Endothelial cell of umbilical vein (primary cell): ENCODE measurements at regions of chr1 and their contacts with region 1.

Region 1: GRCh38 chr1:161382214-161383019 is 14.7 kb upstream of the CFAP126 start:
- DNase-seq: peak; percentile 80
- H3K4me3 ChIP-seq: no peak overlapping the region
- H3K27ac ChIP-seq: peak overlapping the region; percentile 82
- H3K4me1 ChIP-seq: peaks cover 15% of the 10 kb centered on the region
- H3K27me3 ChIP-seq: no peaks in the 10 kb centered on the region
- CTCF ChIP-seq: peak; percentile 24 to 32
- POLR2A ChIP-seq: no peak

Region 2: DNA sequence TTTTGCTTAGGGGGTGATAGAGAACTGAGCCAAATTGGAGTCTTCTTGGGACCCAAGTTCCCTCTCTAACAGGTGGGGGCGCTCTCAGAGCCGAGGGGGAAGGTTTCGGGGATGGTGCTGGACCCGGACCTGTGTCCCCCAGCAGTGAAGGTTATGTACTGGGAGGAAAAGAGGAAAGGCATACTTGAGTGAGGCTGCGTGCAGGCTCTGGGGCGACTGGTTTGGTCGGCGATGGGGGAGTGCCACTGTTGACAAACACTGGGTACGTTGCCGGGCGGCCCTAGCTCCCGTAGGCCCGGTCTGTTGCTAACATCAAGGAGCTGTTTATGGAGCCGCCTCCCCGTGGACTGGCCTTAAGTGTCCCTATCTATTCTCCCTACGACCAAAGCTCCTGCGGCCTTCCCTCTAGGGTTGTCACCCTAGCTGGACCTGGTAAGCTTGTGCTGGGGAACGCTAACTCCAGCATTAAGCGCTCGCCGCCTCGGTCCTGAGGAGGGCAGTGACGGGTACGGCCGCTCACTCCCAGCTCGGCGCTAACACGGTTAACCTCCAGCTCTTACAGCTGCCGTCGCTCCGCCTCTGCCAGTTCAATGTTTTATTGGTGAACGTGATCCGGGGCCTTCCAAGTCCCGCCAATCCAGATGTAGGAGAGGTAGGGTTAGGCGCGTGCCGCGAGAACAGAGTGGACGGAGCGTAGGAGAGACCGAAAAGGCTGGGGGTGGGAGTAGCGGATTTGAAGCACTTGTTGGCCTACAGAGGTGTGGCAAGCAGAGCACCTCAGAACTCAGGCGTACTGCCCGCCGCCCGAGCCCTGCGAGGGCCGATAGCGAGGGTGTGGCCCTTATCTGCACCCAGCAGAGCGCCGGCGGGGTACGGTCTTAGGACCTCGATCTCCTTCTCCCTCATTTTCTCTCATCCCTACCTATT is 216.4 kb before region 1 on chr1 and contains the start of gene PPOX:
- CTCF ChIA-PET with region 1: interaction called, 35 read pairs
- POLR2A ChIA-PET with region 1: interaction called, 4 read pairs
- dilution Hi-C with region 1: no loop called
- intact Hi-C with region 1: loop called (anchors 2 kb)
- DNase-seq: peak; percentile 99
- H3K4me3 ChIP-seq: peak within 1 kb of the TSS; percentile 81 to 87 (median 87)
- H3K27ac ChIP-seq: peak within 1 kb of the TSS; percentile 74
- H3K4me1 ChIP-seq: peaks cover 16% of the 10 kb centered on the region
- H3K27me3 ChIP-seq: no peaks in the 10 kb centered on the region
- CTCF ChIP-seq: peak; percentile 42 to 60
- POLR2A ChIP-seq: peak; percentile 21
- total RNA-seq, gene PPOX: 28.5 and 28.9 TPM in 2 replicates

Region 3: DNA sequence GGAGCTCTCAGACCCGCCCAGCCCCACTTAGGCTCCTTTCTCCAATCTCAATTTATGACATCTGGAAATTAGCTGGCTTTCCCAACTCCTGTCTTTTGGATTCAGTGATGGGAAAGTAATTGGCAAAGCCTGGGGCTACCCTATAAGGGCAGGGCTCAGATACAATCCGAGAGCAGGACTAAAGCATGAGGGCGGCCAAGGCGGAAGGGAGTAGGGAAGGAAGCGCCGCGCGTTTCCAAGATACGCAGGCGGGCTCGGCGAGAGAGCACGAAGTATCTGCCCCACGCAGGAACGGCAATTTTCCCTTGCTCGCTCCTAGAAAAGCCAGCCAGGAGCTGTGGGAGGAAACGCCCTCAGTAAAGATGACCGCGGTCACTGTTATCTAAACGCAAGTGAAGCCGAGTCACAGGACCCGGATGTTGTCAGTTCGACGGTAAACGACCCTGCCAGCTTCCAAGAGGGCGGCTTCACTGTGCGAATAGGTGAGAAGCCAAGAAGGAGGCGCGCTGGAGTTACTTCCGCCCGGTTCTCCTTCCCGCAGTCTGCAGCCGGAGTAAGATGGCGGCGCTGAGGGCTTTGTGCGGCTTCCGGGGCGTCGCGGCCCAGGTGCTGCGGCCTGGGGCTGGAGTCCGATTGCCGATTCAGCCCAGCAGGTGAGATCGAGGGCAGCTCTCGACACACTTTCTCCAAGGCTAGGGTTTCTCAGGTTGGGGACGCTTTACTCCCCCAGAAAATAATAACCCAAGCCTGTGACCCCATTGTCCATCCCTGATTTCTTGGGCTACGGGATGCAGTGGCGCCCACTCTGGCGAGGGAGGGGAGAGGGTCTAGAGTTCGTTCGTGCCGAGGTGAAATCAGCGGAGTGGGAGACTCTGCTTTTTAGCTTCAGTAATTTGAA is 180.3 kb before region 1 on chr1 and contains the start of gene NDUFS2:
- CTCF ChIA-PET with region 1: interaction called, 28 read pairs
- POLR2A ChIA-PET with region 1: no interaction called
- dilution Hi-C with region 1: no loop called
- intact Hi-C with region 1: no loop called
- DNase-seq: peak; percentile 98
- H3K4me3 ChIP-seq: peak within 1 kb of the TSS; percentile 72 to 96 (median 75)
- H3K27ac ChIP-seq: peak within 1 kb of the TSS; percentile 98
- H3K4me1 ChIP-seq: peaks cover 59% of the 10 kb centered on the region
- H3K27me3 ChIP-seq: no peaks in the 10 kb centered on the region
- CTCF ChIP-seq: peak in 1 of 2 donors; percentile 9
- POLR2A ChIP-seq: peak; percentile 93
- total RNA-seq, gene NDUFS2: 95.1 and 99.7 TPM in 2 replicates

Region 4: GRCh38 chr1:161225534-161226319 is 156.7 kb before region 1 on chr1 and contains the start of gene TOMM40L:
- CTCF ChIA-PET with region 1: interaction called, 156 read pairs
- POLR2A ChIA-PET with region 1: no interaction called
- dilution Hi-C with region 1: no loop called
- intact Hi-C with region 1: loop called (anchors 1 kb)
- DNase-seq: peak; percentile 99
- H3K4me3 ChIP-seq: peak within 1 kb of the TSS; percentile 43 to 83 (median 59)
- H3K27ac ChIP-seq: peak within 1 kb of the TSS; percentile 31
- H3K4me1 ChIP-seq: peaks cover 18% of the 10 kb centered on the region
- H3K27me3 ChIP-seq: no peaks in the 10 kb centered on the region
- CTCF ChIP-seq: peak; percentile 55 to 57
- POLR2A ChIP-seq: peak; percentile 36
- total RNA-seq, gene TOMM40L: 18.7 TPM in 2 replicates

Region 5: DNA sequence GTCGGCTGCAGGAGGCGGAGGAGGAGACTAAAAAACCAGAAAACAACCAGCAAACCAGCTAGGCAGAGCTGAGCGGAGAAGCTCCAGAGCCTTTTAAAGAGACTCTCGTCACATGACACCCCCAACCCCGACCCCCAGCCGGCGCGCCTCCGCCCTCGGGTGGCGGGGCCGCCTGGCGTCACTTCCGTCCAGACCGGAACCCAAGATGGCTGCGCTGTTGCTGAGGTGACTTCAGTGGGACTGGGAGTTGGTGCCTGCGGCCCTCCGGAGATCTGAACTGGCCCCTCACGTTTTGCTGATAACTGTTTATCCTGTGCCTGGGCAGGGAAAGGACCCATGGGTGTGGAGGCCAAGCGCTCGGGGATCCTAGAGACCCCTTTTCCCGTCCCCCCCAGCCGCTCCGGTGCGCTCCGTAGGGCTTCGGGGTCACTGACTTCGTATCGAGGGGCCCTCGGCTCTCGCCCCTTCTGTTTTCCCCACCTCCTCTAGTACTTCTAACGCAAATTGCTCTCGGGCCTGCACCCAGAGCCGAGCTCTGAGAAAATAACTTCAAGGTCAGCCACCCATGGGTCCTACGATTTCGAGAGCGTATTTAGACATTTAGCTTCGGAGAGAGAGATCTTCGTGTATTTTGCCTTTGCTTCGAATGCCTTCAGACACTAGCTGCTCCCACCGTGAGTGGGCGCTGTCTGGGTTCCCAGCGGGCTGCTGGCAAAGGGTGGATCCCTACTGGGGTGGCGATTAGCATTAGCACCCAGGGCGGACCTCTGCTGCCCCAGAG is 68.0 kb before region 1 on chr1 and contains the start of gene SDHC:
- CTCF ChIA-PET with region 1: interaction called, 8 read pairs
- POLR2A ChIA-PET with region 1: no interaction called
- dilution Hi-C with region 1: no loop called
- intact Hi-C with region 1: loop called (anchors 5 kb)
- DNase-seq: peak; percentile 92
- H3K4me3 ChIP-seq: peak within 1 kb of the TSS; percentile 45 to 100 (median 80)
- H3K27ac ChIP-seq: peak within 1 kb of the TSS; percentile 93
- H3K4me1 ChIP-seq: peaks cover 9% of the 10 kb centered on the region
- H3K27me3 ChIP-seq: no peaks in the 10 kb centered on the region
- CTCF ChIP-seq: peak; percentile 39 to 64
- POLR2A ChIP-seq: peak; percentile 98
- total RNA-seq, gene SDHC: 136 and 148 TPM in 2 replicates

Region 6: DNA sequence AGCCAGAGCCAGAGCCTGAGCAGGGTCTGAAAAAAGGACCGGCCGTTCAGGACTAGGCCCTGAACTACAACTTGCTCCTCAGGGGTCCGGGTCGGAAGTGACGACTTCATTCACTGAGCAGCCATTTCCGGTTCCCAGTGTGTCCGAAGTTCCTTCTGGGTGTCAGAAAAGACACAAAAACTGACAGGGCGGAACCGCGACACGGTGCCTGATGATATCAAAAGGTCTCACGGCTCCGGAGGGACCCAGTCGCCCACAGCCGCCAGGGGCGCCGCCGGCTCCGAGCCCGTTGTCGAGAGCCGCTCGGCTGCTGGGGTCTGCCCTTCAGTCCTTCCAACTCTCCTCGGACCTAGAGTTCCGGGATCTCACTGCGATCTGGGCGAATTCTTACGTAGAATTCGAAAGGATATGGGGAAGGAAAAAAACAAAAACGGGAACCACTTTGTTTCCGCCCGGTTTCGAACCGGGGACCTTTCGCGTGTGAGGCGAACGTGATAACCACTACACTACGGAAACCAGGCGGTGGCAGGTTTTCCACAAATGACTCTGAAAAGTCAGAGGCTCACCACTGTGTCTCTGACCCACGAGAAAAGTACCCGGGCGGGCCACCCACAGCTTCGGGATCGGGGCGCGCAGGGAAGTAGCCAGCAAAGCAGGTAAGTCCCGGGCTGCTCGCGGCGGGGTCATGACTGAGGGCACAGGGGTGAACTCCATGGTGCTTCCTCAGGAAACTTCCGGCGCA is 17.0 kb after region 1 on chr1:
- CTCF ChIA-PET with region 1: interaction called, 7 read pairs
- POLR2A ChIA-PET with region 1: no interaction called
- dilution Hi-C with region 1: no loop called
- intact Hi-C with region 1: loop called (anchors 1 kb)
- DNase-seq: peak; percentile 92
- H3K4me3 ChIP-seq: peak overlapping the region; percentile 79 to 95 (median 87)
- H3K27ac ChIP-seq: peak overlapping the region; percentile 100
- H3K4me1 ChIP-seq: peaks cover 10% of the 10 kb centered on the region
- H3K27me3 ChIP-seq: peaks cover 0 to 2% of the 10 kb centered on the region in 2 experiments
- CTCF ChIP-seq: peak; percentile 46 to 61
- POLR2A ChIP-seq: peak; percentile 86